Dorsolateral prefrontal cortex (tissue), 120 donors: ENCODE measurements at regions of chr1 and their contacts with region 1.

Region 1: GRCh38 chr1:17439250-17440073 is at the start of gene RCC2:
- DNase-seq: peak; percentile 36 to 82 (median 57)
- H3K4me3 ChIP-seq: peak within 1 kb of the TSS; percentile 61 to 87 (median 75)
- H3K27ac ChIP-seq: peak within 1 kb of the TSS; percentile 6 to 95 (median 84)
- H3K27me3 ChIP-seq: no peaks in the 10 kb centered on the region
- CTCF ChIP-seq: peak in 11 of 56 donors; percentile 3 to 27 (median 12)
- total RNA-seq, gene RCC2: 22.3 to 50.7 (median 35.3) TPM

Region 2: DNA sequence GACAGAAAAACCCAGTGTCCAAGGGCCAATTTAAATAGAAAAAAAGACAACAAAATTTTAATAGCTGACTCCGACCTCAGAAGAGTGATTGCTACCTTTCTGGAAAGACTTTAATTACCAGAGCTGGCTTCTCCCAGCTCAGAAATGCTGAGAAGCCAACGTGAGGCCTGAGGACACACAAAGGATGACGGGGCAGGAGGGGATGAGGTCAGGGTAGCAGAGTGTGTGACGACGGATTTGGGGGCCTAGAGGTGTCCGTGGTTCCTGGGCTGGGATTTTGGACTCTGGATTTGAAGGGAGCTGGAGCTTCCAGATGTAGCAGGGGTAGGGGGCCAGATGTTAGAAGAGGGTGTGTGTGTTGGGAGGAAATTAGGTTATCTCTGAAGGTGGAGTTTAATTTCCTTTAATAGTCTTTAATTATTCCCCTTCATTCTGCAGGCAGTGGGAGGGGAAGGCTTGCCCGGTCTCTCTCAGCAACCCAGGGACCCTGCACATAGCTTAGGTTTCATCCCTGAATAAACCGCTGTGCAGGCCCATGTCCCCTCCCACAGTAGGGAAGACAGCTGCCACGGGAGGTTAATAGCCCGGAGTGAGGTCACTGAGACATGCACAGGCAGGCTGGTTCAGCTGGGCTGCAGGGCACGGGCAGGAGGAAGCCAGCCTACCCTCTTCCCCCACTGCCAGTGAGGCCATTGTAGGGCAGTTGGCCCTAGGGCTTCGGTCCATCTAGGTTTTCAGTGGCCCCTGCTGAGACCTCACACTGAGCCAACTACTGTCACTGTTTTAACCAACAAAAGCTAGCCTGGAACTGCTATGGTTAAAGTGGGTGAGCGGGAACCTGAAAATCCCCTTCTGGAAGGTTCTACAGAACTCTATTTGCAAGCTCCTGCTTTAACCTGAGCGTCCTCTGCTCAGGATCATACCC is 194.4 kb before region 1 on chr1:
- intact Hi-C with region 1: loop called in 1 of 2 experiments (anchors 10 kb)
- DNase-seq: no peak
- H3K4me3 ChIP-seq: no peak overlapping the region
- H3K27ac ChIP-seq: no peak overlapping the region
- H3K27me3 ChIP-seq: peaks cover 0 to 37% (median 0%) of the 10 kb centered on the region in 45 donors
- CTCF ChIP-seq: no peak

Region 3: GRCh38 chr1:17265162-17265561 is 174.3 kb before region 1 on chr1:
- intact Hi-C with region 1: no loop called
- DNase-seq: no peak
- H3K4me3 ChIP-seq: no peak overlapping the region
- H3K27ac ChIP-seq: no peak overlapping the region
- H3K27me3 ChIP-seq: peaks cover 0 to 3% (median 0%) of the 10 kb centered on the region in 45 donors
- CTCF ChIP-seq: no peak

Region 4: GRCh38 chr1:17419626-17420328 is 19.7 kb before region 1 on chr1:
- intact Hi-C with region 1: loop called in 1 of 2 experiments (anchors 2 kb)
- DNase-seq: peak in 9 of 10 donors; percentile 56 to 87 (median 68)
- H3K4me3 ChIP-seq: peak overlapping the region in 19 of 59 donors; percentile 2 to 33 (median 16)
- H3K27ac ChIP-seq: peak overlapping the region in 23 of 59 donors; percentile 3 to 69 (median 26)
- H3K27me3 ChIP-seq: no peaks in the 10 kb centered on the region
- CTCF ChIP-seq: peak; percentile 93 to 100 (median 98)

Region 5: GRCh38 chr1:18091660-18092446 is 652.4 kb after region 1 on chr1:
- intact Hi-C with region 1: no loop called
- DNase-seq: no peak
- H3K4me3 ChIP-seq: no peak overlapping the region
- H3K27ac ChIP-seq: no peak overlapping the region
- H3K27me3 ChIP-seq: peaks cover 0 to 7% (median 0%) of the 10 kb centered on the region in 45 donors
- CTCF ChIP-seq: no peak